ENCODE measurements at regions of chr2 and their contacts with region 1.

Region 1: GRCh38 chr2:121649596-121650314 is 493 bp upstream of the CLASP1 start:
- DNase-seq: peak; percentile 90 to 98
- H3K4me3 ChIP-seq: peak overlapping the region; percentile 54 to 84
- H3K27ac ChIP-seq: peak overlapping the region; percentile 88 to 96
- H3K4me1 ChIP-seq: peaks cover 0 to 12% of the 10 kb centered on the region in 2 donors
- H3K27me3 ChIP-seq: no peaks in the 10 kb centered on the region
- CTCF ChIP-seq: no peak

Region 2: DNA sequence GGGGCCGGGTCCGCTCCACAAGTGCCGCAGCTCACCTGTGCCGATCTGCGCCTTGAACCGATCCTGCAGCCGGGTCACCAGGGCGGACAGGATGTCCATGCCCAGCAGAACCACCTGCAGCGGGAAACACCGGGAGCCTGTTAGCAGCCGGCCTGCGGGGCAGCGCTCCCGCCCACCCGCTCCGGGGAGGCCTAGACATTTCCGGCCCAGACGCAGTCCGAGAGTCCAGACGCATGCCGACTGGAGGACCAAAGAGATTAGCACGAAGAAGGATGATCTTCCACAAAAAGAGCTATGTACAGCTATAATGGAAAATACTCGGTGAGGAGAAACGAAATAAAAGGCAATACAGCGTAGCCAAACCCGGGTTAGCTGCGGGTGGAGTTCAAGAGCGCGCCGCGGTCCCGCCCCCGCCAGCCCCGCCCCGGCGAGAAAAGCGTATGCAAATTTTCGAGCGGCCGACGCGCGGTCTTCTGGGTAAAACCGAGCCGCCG is 119.5 kb before region 1 on chr2:
- intact Hi-C with region 1: loop called (anchors 1 kb)
- DNase-seq: peak in 1 of 2 donors; percentile 86
- H3K4me3 ChIP-seq: peak overlapping the region; percentile 79 to 88
- H3K27ac ChIP-seq: peak overlapping the region; percentile 96 to 99
- H3K4me1 ChIP-seq: peaks cover 7 to 13% of the 10 kb centered on the region in 2 donors
- H3K27me3 ChIP-seq: no peaks in the 10 kb centered on the region
- CTCF ChIP-seq: no peak

Region 3: GRCh38 chr2:121694398-121695178 is 44.8 kb after region 1 on chr2:
- intact Hi-C with region 1: loop called (anchors 5 kb)
- DNase-seq: peak in 1 of 2 donors; percentile 69
- H3K4me3 ChIP-seq: no peak overlapping the region
- H3K27ac ChIP-seq: peak overlapping the region; percentile 58 to 66
- H3K4me1 ChIP-seq: peaks cover 0 to 11% of the 10 kb centered on the region in 2 donors
- H3K27me3 ChIP-seq: no peaks in the 10 kb centered on the region
- CTCF ChIP-seq: no peak

Region 4: DNA sequence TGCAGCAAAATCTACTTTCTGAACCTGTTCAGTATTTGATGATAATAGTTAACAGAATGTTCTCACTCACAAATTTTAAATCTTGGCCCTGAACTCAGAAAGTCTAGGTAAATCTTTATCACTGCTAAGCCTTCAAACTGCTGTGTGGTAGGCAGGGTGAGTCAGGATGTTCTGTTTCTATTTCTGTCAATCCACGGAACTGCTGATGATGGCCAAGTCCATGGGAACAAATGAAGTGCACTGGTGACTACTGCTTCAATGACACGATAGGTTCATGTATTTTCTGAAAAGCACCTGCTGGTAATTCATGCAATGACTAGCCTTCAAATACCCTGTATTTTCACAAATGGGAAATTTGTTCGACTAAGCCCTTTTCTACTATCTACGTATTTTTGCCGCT is 72.7 kb after region 1 on chr2:
- intact Hi-C with region 1: loop called (anchors 2 kb)
- DNase-seq: no peak
- H3K4me3 ChIP-seq: no peak overlapping the region
- H3K27ac ChIP-seq: peak overlapping the region; percentile 58 to 78
- H3K4me1 ChIP-seq: no peaks in the 10 kb centered on the region
- H3K27me3 ChIP-seq: no peaks in the 10 kb centered on the region
- CTCF ChIP-seq: no peak

Region 5: GRCh38 chr2:121736462-121737341 is 86.9 kb after region 1 on chr2 and contains the start of gene NIFK:
- intact Hi-C with region 1: loop called (anchors 1 kb)
- DNase-seq: peak; percentile 96 to 100
- H3K4me3 ChIP-seq: peak within 1 kb of the TSS; percentile 76 to 91
- H3K27ac ChIP-seq: peak within 1 kb of the TSS; percentile 68 to 89
- H3K4me1 ChIP-seq: no peaks in the 10 kb centered on the region
- H3K27me3 ChIP-seq: no peaks in the 10 kb centered on the region
- CTCF ChIP-seq: peak in 1 of 3 experiments; percentile 5
- total RNA-seq, gene NIFK: 31.9 TPM

Region 6: DNA sequence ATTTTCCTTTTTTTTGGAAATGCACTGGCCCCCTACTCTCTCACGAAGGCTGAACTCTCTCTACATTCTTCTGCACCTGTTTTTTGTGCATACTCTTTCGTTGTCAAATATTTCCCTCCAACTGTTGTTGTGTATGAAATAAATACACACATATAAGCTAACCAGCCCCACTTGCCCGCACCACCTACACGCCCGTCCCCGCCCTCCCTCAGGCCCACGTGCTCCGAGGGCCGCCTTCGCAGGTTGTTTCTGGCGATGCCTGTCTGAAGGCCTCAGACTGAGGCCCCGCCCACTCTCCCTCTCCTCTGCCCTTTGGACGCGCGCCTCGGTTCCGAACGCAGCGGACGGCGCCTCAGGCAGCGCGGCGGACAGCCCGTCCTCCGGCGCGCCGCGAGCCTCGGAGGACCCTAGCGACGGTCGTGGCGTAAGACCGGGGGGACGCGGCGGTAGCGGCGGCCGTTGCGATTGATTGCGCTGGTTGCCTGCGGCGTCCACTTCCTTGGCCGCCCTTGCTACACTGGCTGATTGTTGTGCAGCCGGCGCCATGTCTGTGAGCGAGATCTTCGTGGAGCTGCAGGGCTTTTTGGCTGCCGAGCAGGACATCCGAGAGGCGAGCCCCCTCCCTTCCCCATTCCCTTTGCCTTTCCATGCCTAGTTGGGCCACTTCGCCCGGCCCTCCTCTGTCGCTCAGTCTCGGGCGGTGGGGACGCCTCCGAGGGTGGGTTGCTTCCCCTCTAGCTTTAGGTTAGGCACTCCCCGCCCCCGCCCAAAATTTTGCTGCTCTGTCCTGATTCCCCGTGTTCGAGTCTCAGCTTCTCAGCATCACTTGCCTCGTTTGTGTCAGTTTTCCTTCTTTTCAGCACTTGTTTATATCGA is 105.7 kb after region 1 on chr2 and contains the start of gene TSN:
- intact Hi-C with region 1: loop called (anchors 1 kb)
- DNase-seq: peak; percentile 87 to 98
- H3K4me3 ChIP-seq: peak within 1 kb of the TSS; percentile 90 to 94
- H3K27ac ChIP-seq: peak within 1 kb of the TSS; percentile 71 to 78
- H3K4me1 ChIP-seq: peaks cover 5 to 18% of the 10 kb centered on the region in 2 donors
- H3K27me3 ChIP-seq: no peaks in the 10 kb centered on the region
- CTCF ChIP-seq: peak in 1 of 3 experiments; percentile 4
- total RNA-seq, gene TSN: 42.6 TPM

Measured in ascending aorta (tissue), 2 donors.